ENCODE measurements at regions of chr7 and their contacts with region 1.

Region 1: GRCh38 chr7:66591799-66592596 is 36.7 kb upstream of the KCTD7 start:
- DNase-seq: peak; percentile 69 to 95 (median 91)
- ATAC-seq: peak; percentile 98
- H3K4me3 ChIP-seq: peak overlapping the region; percentile 73 to 95
- H3K4me3 Mint-ChIP-seq: peak overlapping the region; percentile 99
- H3K27ac ChIP-seq: peak overlapping the region; percentile 67 to 89
- H3K27ac Mint-ChIP-seq: peak overlapping the region; percentile 98
- H3K4me1 ChIP-seq: peaks cover 37% of the 10 kb centered on the region
- H3K4me1 Mint-ChIP-seq: peaks cover 49% of the 10 kb centered on the region
- H3K27me3 ChIP-seq: no peaks in the 10 kb centered on the region
- H3K27me3 Mint-ChIP-seq: no peaks in the 10 kb centered on the region
- CTCF ChIP-seq: no peak

Region 2: DNA sequence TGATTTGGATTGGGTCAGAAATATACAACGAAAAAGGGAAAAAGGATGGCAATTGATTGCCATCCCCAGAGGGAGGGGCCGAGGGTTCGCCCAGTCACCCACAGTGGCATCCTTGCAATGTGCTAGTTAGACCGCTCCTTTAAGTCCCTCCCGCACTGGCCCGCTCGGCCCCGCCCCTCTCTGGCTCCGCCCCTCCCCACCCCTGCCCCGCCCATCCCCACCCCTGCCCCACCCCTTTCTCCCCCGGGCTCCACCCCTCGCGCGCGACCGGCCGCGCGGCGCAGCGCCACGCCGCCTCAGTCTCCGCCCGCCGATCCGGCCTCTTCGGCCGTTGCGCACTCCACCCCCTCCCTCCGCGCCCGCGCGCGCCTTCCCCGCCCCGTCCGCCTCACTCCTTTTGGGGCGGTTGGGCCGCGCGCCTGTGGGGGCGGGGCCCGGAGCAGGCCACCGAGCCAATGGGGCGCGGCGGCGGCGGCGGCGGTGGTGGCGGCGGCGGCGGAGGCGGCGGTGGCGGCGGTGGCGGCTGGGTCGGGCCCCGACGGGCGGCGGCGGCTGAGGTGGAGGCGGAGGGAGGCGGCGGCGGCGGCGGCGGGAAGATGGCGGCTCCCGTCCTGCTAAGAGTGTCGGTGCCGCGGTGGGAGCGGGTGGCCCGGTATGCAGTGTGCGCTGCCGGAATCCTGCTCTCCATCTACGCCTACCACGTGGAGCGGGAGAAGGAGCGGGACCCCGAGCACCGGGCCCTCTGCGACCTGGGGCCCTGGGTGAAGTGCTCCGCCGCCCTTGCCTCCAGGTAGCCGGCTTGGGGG is 719.0 kb before region 1 on chr7 and contains the start of gene VKORC1L1:
- CTCF ChIA-PET with region 1: no interaction called
- POLR2A ChIA-PET with region 1: no interaction called
- intact Hi-C with region 1: no loop called
- DNase-seq: peak; percentile 90 to 98 (median 94)
- ATAC-seq: peak; percentile 86
- H3K4me3 ChIP-seq: peak within 1 kb of the TSS; percentile 48 to 69
- H3K4me3 Mint-ChIP-seq: peak within 1 kb of the TSS; percentile 85
- H3K27ac ChIP-seq: peak within 1 kb of the TSS in 1 of 2 experiments; percentile 54
- H3K27ac Mint-ChIP-seq: peak within 1 kb of the TSS; percentile 66
- H3K4me1 ChIP-seq: no peaks in the 10 kb centered on the region
- H3K4me1 Mint-ChIP-seq: peaks cover 8% of the 10 kb centered on the region
- H3K27me3 ChIP-seq: no peaks in the 10 kb centered on the region
- H3K27me3 Mint-ChIP-seq: no peaks in the 10 kb centered on the region
- CTCF ChIP-seq: no peak
- total RNA-seq, gene VKORC1L1: 1.4 to 2.0 TPM

Region 3: DNA sequence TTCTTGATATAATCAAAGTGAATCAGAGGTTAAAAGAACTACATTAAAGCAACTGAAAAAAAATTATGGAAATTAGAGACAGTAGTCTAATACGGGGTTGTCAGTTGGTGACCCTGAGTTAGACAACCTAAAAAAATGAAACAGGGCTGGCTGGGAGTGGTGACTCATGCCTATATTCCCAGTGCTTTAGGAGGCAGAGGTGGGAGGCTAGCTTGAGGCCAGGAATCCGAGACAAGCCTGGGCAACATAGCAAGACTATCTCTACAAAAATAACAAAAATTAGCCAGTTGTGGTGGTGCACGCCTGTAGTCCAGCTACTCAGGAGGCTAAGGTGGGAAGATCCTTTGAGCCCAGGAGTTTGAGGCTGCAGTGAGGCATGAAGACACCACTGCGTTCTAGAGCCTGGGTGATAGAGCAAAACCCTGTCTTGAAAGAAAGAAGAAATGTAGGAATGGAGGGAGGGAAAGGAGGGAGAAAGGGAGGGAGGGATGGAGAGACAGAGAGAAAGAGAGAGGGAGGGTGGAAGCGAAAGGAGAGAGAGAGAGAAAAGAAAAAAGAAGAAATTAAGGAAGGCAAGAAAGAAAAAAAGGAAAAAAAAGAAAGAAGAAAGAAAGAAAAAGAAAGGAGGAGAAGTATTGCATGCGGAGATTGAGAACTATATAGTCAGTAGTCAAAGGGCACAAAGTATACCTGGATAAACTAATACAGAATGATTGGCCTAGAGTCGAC is 220.7 kb before region 1 on chr7:
- CTCF ChIA-PET with region 1: no interaction called
- POLR2A ChIA-PET with region 1: no interaction called
- intact Hi-C with region 1: no loop called
- DNase-seq: no peak
- ATAC-seq: no peak
- H3K4me3 ChIP-seq: no peak overlapping the region
- H3K4me3 Mint-ChIP-seq: no peak overlapping the region
- H3K27ac ChIP-seq: no peak overlapping the region
- H3K27ac Mint-ChIP-seq: no peak overlapping the region
- H3K4me1 ChIP-seq: no peaks in the 10 kb centered on the region
- H3K4me1 Mint-ChIP-seq: no peaks in the 10 kb centered on the region
- H3K27me3 ChIP-seq: no peaks in the 10 kb centered on the region
- H3K27me3 Mint-ChIP-seq: no peaks in the 10 kb centered on the region
- CTCF ChIP-seq: no peak

Region 4: DNA sequence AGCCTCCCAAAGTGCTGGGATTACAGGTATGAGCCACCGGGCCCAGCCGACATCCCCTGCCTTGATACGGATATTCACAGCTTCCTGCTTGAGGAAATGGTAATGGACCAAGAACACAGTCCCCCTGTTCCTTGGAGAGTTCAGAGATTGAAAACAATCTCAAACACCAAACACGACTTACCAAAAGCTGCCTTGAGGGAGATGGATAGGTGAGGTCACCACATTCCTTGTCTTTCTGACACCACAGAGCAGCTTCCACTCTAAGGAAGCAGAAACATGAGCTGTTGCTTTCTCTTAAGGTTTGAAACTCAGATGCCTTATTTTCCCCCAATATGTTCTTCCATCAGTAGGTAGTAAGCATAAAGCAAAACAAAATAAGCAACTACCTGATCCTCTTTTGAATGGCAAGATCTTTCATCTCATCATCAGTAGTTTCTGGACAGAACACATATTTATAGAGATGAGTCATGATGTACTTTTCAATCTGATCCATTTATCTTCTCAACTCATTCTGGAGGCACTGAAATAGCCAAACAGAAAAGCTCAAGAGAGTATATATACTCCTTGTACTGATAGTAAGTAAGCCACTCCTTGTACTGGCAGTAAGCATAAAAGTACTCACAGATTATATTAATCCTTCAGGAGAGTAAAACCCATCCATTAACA is 162.4 kb before region 1 on chr7:
- CTCF ChIA-PET with region 1: no interaction called
- POLR2A ChIA-PET with region 1: no interaction called
- intact Hi-C with region 1: no loop called
- DNase-seq: no peak
- ATAC-seq: no peak
- H3K4me3 ChIP-seq: no peak overlapping the region
- H3K4me3 Mint-ChIP-seq: no peak overlapping the region
- H3K27ac ChIP-seq: no peak overlapping the region
- H3K27ac Mint-ChIP-seq: no peak overlapping the region
- H3K4me1 ChIP-seq: no peaks in the 10 kb centered on the region
- H3K4me1 Mint-ChIP-seq: no peaks in the 10 kb centered on the region
- H3K27me3 ChIP-seq: no peaks in the 10 kb centered on the region
- H3K27me3 Mint-ChIP-seq: no peaks in the 10 kb centered on the region
- CTCF ChIP-seq: no peak

Region 5: DNA sequence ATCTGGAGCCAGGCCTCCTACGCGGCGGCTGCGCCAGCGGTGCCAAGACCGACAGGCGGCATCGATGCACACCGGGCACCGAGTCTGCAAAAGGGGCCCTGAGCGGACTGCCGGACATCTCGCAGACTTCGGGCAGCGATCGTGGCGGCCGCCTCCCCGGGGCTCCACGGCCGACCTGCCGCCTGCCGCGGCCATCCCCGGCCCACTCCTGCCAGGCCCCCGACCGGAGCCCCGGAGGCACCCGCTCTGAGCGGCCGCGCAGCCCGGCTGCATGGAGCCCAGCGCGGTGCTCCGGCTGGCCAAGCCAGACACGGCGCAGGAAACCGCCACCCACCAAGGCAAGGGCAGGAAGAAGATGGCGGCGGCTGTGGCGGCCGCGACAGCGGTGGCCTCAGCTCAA is 117.6 kb before region 1 on chr7:
- CTCF ChIA-PET with region 1: no interaction called
- POLR2A ChIA-PET with region 1: no interaction called
- intact Hi-C with region 1: loop called in 1 of 2 experiments (anchors 2 kb)
- DNase-seq: no peak
- ATAC-seq: no peak
- H3K4me3 ChIP-seq: no peak overlapping the region
- H3K4me3 Mint-ChIP-seq: no peak overlapping the region
- H3K27ac ChIP-seq: no peak overlapping the region
- H3K27ac Mint-ChIP-seq: no peak overlapping the region
- H3K4me1 ChIP-seq: no peaks in the 10 kb centered on the region
- H3K4me1 Mint-ChIP-seq: no peaks in the 10 kb centered on the region
- H3K27me3 ChIP-seq: no peaks in the 10 kb centered on the region
- H3K27me3 Mint-ChIP-seq: no peaks in the 10 kb centered on the region
- CTCF ChIP-seq: no peak

Region 6: DNA sequence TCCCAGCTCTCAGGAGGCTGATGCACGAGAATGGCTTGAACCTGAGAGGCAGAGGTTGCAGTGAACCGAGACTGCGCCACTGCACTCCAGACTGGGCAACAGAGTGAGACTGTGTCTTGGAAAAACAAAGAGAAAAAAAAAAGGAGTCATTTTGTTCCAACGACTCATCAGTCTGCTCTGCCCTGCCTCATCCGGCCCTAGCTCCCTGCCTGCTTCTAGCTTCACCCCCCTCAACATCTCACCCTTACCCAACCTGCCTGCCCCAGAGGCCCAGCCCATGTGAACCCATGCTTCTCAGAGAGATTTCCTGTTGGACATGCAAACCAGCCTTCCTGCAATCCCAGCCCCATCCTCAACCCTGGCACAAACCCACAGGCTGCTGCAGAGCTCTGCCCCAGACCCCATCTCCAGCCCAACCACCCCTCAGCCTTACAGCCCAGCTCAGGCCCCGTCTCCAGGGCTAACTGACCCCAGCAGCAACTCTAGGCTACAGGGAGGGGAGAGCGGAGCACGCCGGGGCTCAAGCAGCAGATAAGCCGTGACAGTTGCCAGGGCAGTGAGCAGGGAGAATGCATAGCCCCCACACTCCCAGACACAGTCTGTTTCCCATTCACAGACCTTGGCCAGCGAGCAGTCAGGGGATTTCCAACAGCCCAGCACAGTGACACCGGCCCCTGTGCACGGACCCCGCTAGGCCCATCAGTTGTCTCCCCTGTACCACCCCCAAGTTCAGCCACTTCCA is 49.3 kb before region 1 on chr7:
- CTCF ChIA-PET with region 1: no interaction called
- POLR2A ChIA-PET with region 1: no interaction called
- intact Hi-C with region 1: no loop called
- DNase-seq: no peak
- ATAC-seq: no peak
- H3K4me3 ChIP-seq: no peak overlapping the region
- H3K4me3 Mint-ChIP-seq: no peak overlapping the region
- H3K27ac ChIP-seq: no peak overlapping the region
- H3K27ac Mint-ChIP-seq: no peak overlapping the region
- H3K4me1 ChIP-seq: no peaks in the 10 kb centered on the region
- H3K4me1 Mint-ChIP-seq: no peaks in the 10 kb centered on the region
- H3K27me3 ChIP-seq: no peaks in the 10 kb centered on the region
- H3K27me3 Mint-ChIP-seq: no peaks in the 10 kb centered on the region
- CTCF ChIP-seq: no peak

Region 7: DNA sequence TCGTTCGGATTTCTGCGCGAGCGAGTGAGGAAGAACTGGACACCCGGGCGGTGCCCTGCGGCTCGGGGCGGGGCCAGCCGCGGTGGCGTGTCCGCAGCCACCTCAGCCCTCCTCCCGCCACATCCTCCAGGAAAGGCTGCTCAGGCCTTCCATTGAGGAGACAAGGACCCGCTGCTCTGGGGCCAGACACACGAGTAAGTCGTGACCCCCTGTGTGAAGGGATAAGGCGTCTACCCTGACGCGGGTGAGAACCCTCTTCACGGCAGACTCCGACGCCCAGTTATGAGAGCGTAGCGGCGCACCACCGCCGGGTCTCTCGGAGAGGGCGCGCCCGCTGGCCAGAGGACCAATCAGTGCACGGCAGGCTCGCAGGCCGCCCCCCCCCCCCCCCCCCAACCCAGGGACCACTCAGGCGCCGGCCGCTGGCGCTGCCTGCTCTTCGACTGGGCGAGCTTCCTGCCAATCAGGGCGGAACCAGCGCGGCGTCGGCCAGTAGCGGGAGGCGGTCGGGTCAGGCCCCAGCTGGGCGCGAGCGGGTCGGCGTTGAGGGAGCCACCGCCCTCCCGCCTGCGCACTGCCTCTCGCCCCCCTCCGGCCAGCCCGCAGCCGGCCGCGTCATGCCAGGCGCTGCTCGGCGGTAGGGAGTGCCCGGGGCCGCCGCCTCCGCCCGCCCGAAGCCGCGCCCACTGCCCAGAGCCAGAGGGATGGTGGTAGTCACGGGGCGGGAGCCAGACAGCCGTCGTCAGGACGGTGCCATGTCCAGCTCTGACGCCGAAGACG is 36.6 kb after region 1 on chr7 and contains the start of gene KCTD7:
- CTCF ChIA-PET with region 1: no interaction called
- POLR2A ChIA-PET with region 1: interaction called, 6 read pairs
- intact Hi-C with region 1: loop called (anchors 1 kb)
- DNase-seq: peak; percentile 91 to 98 (median 94)
- ATAC-seq: peak; percentile 89
- H3K4me3 ChIP-seq: peak within 1 kb of the TSS; percentile 91 to 99
- H3K4me3 Mint-ChIP-seq: peak within 1 kb of the TSS; percentile 89
- H3K27ac ChIP-seq: peak within 1 kb of the TSS; percentile 89 to 97
- H3K27ac Mint-ChIP-seq: peak within 1 kb of the TSS; percentile 91
- H3K4me1 ChIP-seq: peaks cover 42% of the 10 kb centered on the region
- H3K4me1 Mint-ChIP-seq: peaks cover 51% of the 10 kb centered on the region
- H3K27me3 ChIP-seq: no peaks in the 10 kb centered on the region
- H3K27me3 Mint-ChIP-seq: no peaks in the 10 kb centered on the region
- CTCF ChIP-seq: no peak
- total RNA-seq, gene KCTD7: 12.9 to 13.2 TPM

Region 8: GRCh38 chr7:66654123-66654732 is 62.2 kb after region 1 on chr7:
- CTCF ChIA-PET with region 1: no interaction called
- POLR2A ChIA-PET with region 1: interaction called, 3 read pairs
- intact Hi-C with region 1: loop called (anchors 1 kb)
- DNase-seq: peak; percentile 94 to 99 (median 98)
- ATAC-seq: peak; percentile 91
- H3K4me3 ChIP-seq: peak overlapping the region; percentile 64 to 86
- H3K4me3 Mint-ChIP-seq: peak overlapping the region; percentile 99
- H3K27ac ChIP-seq: peak overlapping the region; percentile 92 to 98
- H3K27ac Mint-ChIP-seq: peak overlapping the region; percentile 99
- H3K4me1 ChIP-seq: peaks cover 7% of the 10 kb centered on the region
- H3K4me1 Mint-ChIP-seq: peaks cover 24% of the 10 kb centered on the region
- H3K27me3 ChIP-seq: no peaks in the 10 kb centered on the region
- H3K27me3 Mint-ChIP-seq: no peaks in the 10 kb centered on the region
- CTCF ChIP-seq: no peak